ENCODE measurements at regions of chr5 and their contacts with region 1.

Region 1: GRCh38 chr5:96868603-96869371 is 7.5 kb upstream of the ERAP2 start:
- DNase-seq: no peak
- ATAC-seq: peak; percentile 90
- H3K4me3 Mint-ChIP-seq: no peak overlapping the region
- H3K27ac Mint-ChIP-seq: no peak overlapping the region
- H3K4me1 Mint-ChIP-seq: peaks cover 51% of the 10 kb centered on the region
- H3K27me3 Mint-ChIP-seq: no peaks in the 10 kb centered on the region

Region 2: DNA sequence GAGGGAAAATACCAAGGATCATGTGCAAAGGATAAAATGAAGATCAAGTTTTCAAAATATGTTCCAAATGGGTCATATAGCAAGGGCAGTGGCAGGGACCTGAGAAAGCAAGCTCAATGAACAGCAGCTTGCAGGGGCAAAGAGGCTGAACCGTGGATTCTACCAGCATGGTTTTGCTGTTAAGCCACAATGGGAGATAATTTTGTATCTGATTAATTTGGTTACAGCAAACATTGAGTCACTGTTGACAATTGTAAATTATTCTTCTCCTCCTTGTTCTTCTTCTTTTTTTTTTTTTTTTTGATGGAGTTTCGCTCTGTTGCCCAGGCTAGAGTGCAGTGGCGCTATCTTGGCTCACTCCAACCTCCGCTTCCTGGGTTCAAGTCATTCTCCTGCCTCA is 10.9 kb before region 1 on chr5:
- CTCF ChIA-PET with region 1: interaction called, 12 read pairs
- DNase-seq: no peak
- ATAC-seq: peak; percentile 23
- H3K4me3 Mint-ChIP-seq: no peak overlapping the region
- H3K27ac Mint-ChIP-seq: no peak overlapping the region
- H3K4me1 Mint-ChIP-seq: peaks cover 12% of the 10 kb centered on the region
- H3K27me3 Mint-ChIP-seq: peaks cover 7% of the 10 kb centered on the region

Region 3: DNA sequence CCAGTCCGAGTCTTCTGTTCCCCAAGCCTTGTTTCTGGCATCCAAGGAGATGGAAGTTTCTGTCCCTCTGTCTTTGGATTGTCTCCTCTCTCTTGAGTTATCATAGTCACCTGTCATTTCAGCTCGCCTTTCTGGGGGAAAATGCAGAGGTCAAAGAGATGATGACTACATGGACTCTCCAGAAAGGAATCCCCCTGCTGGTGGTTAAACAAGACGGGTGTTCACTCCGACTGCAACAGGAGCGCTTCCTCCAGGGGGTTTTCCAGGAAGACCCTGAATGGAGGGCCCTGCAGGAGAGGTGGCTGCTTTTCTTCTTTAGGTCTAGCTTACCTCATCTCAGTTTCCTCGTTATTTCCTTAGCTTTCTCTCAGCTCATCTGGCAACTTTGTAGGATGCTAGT is 32.6 kb after region 1 on chr5:
- CTCF ChIA-PET with region 1: interaction called, 13 read pairs
- DNase-seq: no peak
- ATAC-seq: no peak
- H3K4me3 Mint-ChIP-seq: no peak overlapping the region
- H3K27ac Mint-ChIP-seq: no peak overlapping the region
- H3K4me1 Mint-ChIP-seq: peaks cover 20% of the 10 kb centered on the region
- H3K27me3 Mint-ChIP-seq: no peaks in the 10 kb centered on the region

Region 4: GRCh38 chr5:97142521-97143254 is 273.9 kb after region 1 on chr5 and contains the start of gene LIX1:
- CTCF ChIA-PET with region 1: interaction called, 27 read pairs
- DNase-seq: peak; percentile 62
- ATAC-seq: peak; percentile 87
- H3K4me3 Mint-ChIP-seq: no peak within 1 kb of the TSS
- H3K27ac Mint-ChIP-seq: no peak within 1 kb of the TSS
- H3K4me1 Mint-ChIP-seq: no peaks in the 10 kb centered on the region
- H3K27me3 Mint-ChIP-seq: peaks cover 24% of the 10 kb centered on the region
- total RNA-seq, gene LIX1: not detected

Measured in activated CD8-positive, alpha-beta memory T cell treated with anti-CD3 and anti-CD28 coated beads, Interleukin-2, amount 10 ng/mL, durations not matched to agents 7 days and 5 days (primary cell).